ENCODE measurements at regions of chr15 and their contacts with region 1.

Region 1: DNA sequence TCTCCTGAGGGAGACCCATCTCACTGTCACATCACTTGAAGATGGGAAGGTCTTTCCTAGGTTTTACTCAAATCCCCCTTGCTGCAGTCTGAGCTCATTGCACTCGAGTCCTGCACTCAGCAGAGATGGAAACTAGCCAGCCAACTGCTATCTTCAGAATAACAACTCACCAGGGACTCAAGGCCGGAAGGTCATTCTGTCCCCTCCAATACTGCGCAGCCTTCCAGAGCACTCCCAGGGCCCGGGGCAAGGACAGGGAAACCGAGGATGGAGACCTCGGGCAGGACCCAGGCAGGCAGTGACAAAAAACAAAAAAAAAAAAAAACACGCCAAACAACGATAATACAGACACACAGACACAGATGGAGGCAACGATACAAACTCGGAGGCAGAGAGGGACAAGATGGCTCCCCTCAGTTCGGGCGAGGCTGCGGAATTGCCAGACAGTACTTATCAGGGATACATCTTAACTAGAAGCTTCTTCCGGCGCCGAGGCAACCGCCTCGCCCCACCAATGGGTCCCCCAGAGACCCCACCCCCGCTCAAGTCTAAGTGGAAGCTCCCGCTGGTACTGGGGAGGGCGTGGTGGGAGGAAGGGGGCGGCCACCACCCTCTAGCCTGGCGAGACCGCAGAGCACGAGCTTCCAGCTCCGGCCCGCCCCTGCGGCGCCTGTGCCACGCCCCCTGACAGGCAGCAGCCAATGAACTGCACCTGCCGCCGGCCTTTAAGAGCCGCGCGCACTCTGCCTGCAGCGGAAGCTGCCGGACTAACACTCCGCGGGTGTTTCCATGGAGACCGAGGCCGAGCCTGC is 7.0 kb upstream of the MAP1A start:
- DNase-seq: peak; percentile 91 to 96 (median 94)
- ATAC-seq: peak; percentile 97
- H3K4me3 ChIP-seq: peak overlapping the region; percentile 88
- H3K4me3 Mint-ChIP-seq: peak overlapping the region; percentile 89 to 100 (median 94)
- H3K27ac ChIP-seq: peak overlapping the region; percentile 76
- H3K27ac Mint-ChIP-seq: peak overlapping the region; percentile 92 to 99 (median 97)
- H3K4me1 ChIP-seq: peaks cover 14 to 17% of the 10 kb centered on the region in 2 donors
- H3K4me1 Mint-ChIP-seq: peaks cover 14 to 51% (median 28%) of the 10 kb centered on the region in 7 donors
- H3K27me3 ChIP-seq: no peaks in the 10 kb centered on the region
- H3K27me3 Mint-ChIP-seq: peaks cover 0 to 2% (median under 1%) of the 10 kb centered on the region in 5 donors

Region 2: GRCh38 chr15:42796955-42797779 is 713.2 kb before region 1 on chr15:
- CTCF ChIA-PET with region 1: no interaction called
- POLR2A ChIA-PET with region 1: no interaction called
- intact Hi-C with region 1: no loop called
- DNase-seq: no peak
- ATAC-seq: no peak
- H3K4me3 ChIP-seq: no peak overlapping the region
- H3K4me3 Mint-ChIP-seq: no peak overlapping the region
- H3K27ac ChIP-seq: no peak overlapping the region
- H3K27ac Mint-ChIP-seq: no peak overlapping the region
- H3K4me1 ChIP-seq: no peaks in the 10 kb centered on the region
- H3K4me1 Mint-ChIP-seq: peaks cover 0 to 15% (median 7%) of the 10 kb centered on the region in 7 donors
- H3K27me3 ChIP-seq: no peaks in the 10 kb centered on the region
- H3K27me3 Mint-ChIP-seq: no peaks in the 10 kb centered on the region

Region 3: GRCh38 chr15:43225201-43225949 is 285.0 kb before region 1 on chr15:
- CTCF ChIA-PET with region 1: no interaction called
- POLR2A ChIA-PET with region 1: no interaction called
- intact Hi-C with region 1: loop called in 1 of 2 experiments (anchors 10 kb)
- DNase-seq: peak in 7 of 9 donors; percentile 29 to 69 (median 56)
- ATAC-seq: peak; percentile 85
- H3K4me3 ChIP-seq: no peak overlapping the region
- H3K4me3 Mint-ChIP-seq: peak overlapping the region in 4 of 10 donors; percentile 1 to 62 (median 28)
- H3K27ac ChIP-seq: no peak overlapping the region
- H3K27ac Mint-ChIP-seq: no peak overlapping the region
- H3K4me1 ChIP-seq: no peaks in the 10 kb centered on the region
- H3K4me1 Mint-ChIP-seq: peaks cover 1 to 9% (median 7%) of the 10 kb centered on the region in 7 donors
- H3K27me3 ChIP-seq: no peaks in the 10 kb centered on the region
- H3K27me3 Mint-ChIP-seq: peaks cover 5 to 24% (median 11%) of the 10 kb centered on the region in 5 donors

Region 4: GRCh38 chr15:43370975-43371974 is 139.1 kb before region 1 on chr15 and contains the starts of genes TUBGCP4 and ZSCAN29:
- CTCF ChIA-PET with region 1: interaction called, 4 read pairs
- POLR2A ChIA-PET with region 1: interaction called, 3 read pairs
- intact Hi-C with region 1: loop called (anchors 1 to 2 kb)
- DNase-seq: peak; percentile 52 to 89 (median 62)
- ATAC-seq: peak; percentile 81
- H3K4me3 ChIP-seq: peak within 1 kb of the TSS; percentile 84
- H3K4me3 Mint-ChIP-seq: peak within 1 kb of the TSS; percentile 90 to 96 (median 93)
- H3K27ac ChIP-seq: peak within 1 kb of the TSS; percentile 60
- H3K27ac Mint-ChIP-seq: peak within 1 kb of the TSS; percentile 80 to 92 (median 88)
- H3K4me1 ChIP-seq: peaks cover 22 to 23% of the 10 kb centered on the region in 2 donors
- H3K4me1 Mint-ChIP-seq: peaks cover 39 to 69% (median 56%) of the 10 kb centered on the region in 7 donors
- H3K27me3 ChIP-seq: no peaks in the 10 kb centered on the region
- H3K27me3 Mint-ChIP-seq: no peaks in the 10 kb centered on the region
- total RNA-seq, gene TUBGCP4: 10.9 to 34.7 (median 17.7) TPM
- total RNA-seq, gene ZSCAN29: 12.9 to 36.9 (median 33.6) TPM

Region 5: GRCh38 chr15:43440721-43441281 is 69.6 kb before region 1 on chr15:
- CTCF ChIA-PET with region 1: interaction called, 8 read pairs
- POLR2A ChIA-PET with region 1: no interaction called
- intact Hi-C with region 1: loop called (anchors 1 kb)
- DNase-seq: peak in 5 of 9 donors; percentile 6 to 25 (median 15)
- ATAC-seq: peak; percentile 87
- H3K4me3 ChIP-seq: no peak overlapping the region
- H3K4me3 Mint-ChIP-seq: peak overlapping the region in 1 of 10 donors; percentile 20
- H3K27ac ChIP-seq: no peak overlapping the region
- H3K27ac Mint-ChIP-seq: peak overlapping the region in 4 of 9 donors; percentile 20 to 91 (median 40)
- H3K4me1 ChIP-seq: no peaks in the 10 kb centered on the region
- H3K4me1 Mint-ChIP-seq: peaks cover 0 to 9% (median 0%) of the 10 kb centered on the region in 7 donors
- H3K27me3 ChIP-seq: no peaks in the 10 kb centered on the region
- H3K27me3 Mint-ChIP-seq: no peaks in the 10 kb centered on the region

Region 6: GRCh38 chr15:43483306-43484128 is 26.9 kb before region 1 on chr15:
- CTCF ChIA-PET with region 1: interaction called, 14 read pairs
- POLR2A ChIA-PET with region 1: interaction called, 7 read pairs
- intact Hi-C with region 1: loop called (anchors 1 to 5 kb)
- DNase-seq: peak in 5 of 9 donors; percentile 17 to 50 (median 33)
- ATAC-seq: no peak
- H3K4me3 ChIP-seq: no peak overlapping the region
- H3K4me3 Mint-ChIP-seq: no peak overlapping the region
- H3K27ac ChIP-seq: no peak overlapping the region
- H3K27ac Mint-ChIP-seq: peak overlapping the region in 1 of 9 donors; percentile 12
- H3K4me1 ChIP-seq: no peaks in the 10 kb centered on the region
- H3K4me1 Mint-ChIP-seq: peaks cover 11 to 19% (median 16%) of the 10 kb centered on the region in 7 donors
- H3K27me3 ChIP-seq: no peaks in the 10 kb centered on the region
- H3K27me3 Mint-ChIP-seq: no peaks in the 10 kb centered on the region

Region 7: GRCh38 chr15:43492673-43493601 is 17.5 kb before region 1 on chr15 and contains the start of gene TP53BP1:
- CTCF ChIA-PET with region 1: interaction called, 13 read pairs
- POLR2A ChIA-PET with region 1: interaction called, 56 read pairs
- intact Hi-C with region 1: loop called (anchors 1 kb)
- DNase-seq: peak; percentile 82 to 97 (median 91)
- ATAC-seq: peak; percentile 99
- H3K4me3 ChIP-seq: peak within 1 kb of the TSS; percentile 89
- H3K4me3 Mint-ChIP-seq: peak within 1 kb of the TSS; percentile 87 to 99 (median 96)
- H3K27ac ChIP-seq: peak within 1 kb of the TSS; percentile 93
- H3K27ac Mint-ChIP-seq: peak within 1 kb of the TSS; percentile 83 to 99 (median 96)
- H3K4me1 ChIP-seq: peaks cover 11 to 13% of the 10 kb centered on the region in 2 donors
- H3K4me1 Mint-ChIP-seq: peaks cover 23 to 44% (median 33%) of the 10 kb centered on the region in 7 donors
- H3K27me3 ChIP-seq: no peaks in the 10 kb centered on the region
- H3K27me3 Mint-ChIP-seq: no peaks in the 10 kb centered on the region
- total RNA-seq, gene TP53BP1: 34.5 to 41.6 (median 40.6) TPM

Region 8: DNA sequence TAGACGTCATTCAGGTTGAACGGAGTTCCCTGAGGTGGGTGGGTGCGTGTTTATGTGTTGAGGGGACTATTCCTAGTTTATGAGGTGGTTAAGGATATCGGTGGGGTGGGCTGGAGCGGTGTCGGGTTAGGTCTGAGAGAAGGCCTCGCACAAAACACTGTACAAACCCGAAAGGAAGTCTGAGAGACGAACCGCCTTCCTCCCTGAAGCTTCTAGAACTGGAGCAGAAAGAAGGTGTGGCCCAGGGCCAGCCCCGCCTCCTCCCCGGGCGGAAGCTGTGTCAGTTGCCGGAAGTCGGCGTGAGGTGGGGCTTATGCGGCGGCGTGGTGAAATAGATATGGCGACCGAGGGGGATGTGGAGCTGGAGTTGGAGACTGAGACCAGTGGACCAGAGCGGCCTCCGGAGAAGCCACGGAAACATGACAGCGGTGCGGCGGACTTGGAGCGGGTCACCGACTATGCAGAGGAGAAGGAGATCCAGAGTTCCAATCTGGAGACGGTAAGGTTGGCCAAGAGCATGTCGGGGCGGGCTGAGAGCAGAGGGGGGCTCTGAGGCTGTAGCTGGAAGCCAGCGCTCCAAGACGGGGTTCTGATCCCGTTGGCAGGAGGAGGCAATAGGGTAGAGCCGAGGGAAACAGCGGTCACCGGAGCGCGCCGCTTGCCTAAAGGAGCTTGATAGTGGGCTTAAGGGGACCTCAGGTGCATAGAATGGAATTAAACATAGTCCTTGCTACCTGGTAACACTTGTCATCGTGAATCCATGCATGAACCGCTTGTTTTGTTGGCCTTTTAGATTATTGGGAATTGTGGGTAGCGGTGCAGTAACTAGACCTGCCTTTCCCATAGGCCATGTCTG is 290.1 kb after region 1 on chr15 and contains the start of gene HYPK:
- CTCF ChIA-PET with region 1: no interaction called
- POLR2A ChIA-PET with region 1: no interaction called
- intact Hi-C with region 1: loop called in 1 of 2 experiments (anchors 2 kb)
- DNase-seq: peak; percentile 77 to 95 (median 91)
- ATAC-seq: peak; percentile 99
- H3K4me3 ChIP-seq: peak within 1 kb of the TSS; percentile 98
- H3K4me3 Mint-ChIP-seq: peak within 1 kb of the TSS; percentile 89 to 100 (median 99)
- H3K27ac ChIP-seq: peak within 1 kb of the TSS; percentile 85
- H3K27ac Mint-ChIP-seq: peak within 1 kb of the TSS; percentile 94 to 100 (median 97)
- H3K4me1 ChIP-seq: peaks cover 14 to 15% of the 10 kb centered on the region in 2 donors
- H3K4me1 Mint-ChIP-seq: peaks cover 21 to 54% (median 49%) of the 10 kb centered on the region in 7 donors
- H3K27me3 ChIP-seq: no peaks in the 10 kb centered on the region
- H3K27me3 Mint-ChIP-seq: no peaks in the 10 kb centered on the region
- total RNA-seq, gene HYPK: 16.9 to 32.1 (median 27.0) TPM